ENCODE measurements at regions of chr1 and their contacts with region 1.

Region 1: DNA sequence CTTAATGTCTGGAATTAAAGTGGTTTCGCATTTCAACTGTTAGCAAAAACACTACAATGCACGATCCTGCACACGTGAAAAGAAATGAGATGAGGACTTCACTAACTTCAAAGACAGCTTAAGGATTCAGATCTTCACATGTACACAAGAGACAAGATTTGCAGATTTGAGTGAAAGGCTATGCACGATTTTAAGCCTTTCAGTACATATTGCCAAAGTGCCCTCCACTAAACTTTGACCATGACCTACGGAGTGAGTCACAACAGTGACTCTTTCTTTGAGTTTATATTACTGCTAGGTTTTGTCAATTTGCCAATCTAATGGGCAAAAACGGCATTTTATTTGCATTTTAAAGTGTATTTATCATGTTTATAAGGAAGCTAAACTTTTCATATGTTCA is 41.2 kb upstream of the CR1L start:
- DNase-seq: no peak
- ATAC-seq: no peak
- H3K4me3 ChIP-seq: no peak overlapping the region
- H3K27ac ChIP-seq: no peak overlapping the region
- H3K4me1 ChIP-seq: no peaks in the 10 kb centered on the region
- H3K27me3 ChIP-seq: no peaks in the 10 kb centered on the region
- CTCF ChIP-seq: no peak
- EP300 ChIP-seq: no peak
- POLR2A ChIP-seq: no peak
- RAD21 ChIP-seq: no peak

Region 2: DNA sequence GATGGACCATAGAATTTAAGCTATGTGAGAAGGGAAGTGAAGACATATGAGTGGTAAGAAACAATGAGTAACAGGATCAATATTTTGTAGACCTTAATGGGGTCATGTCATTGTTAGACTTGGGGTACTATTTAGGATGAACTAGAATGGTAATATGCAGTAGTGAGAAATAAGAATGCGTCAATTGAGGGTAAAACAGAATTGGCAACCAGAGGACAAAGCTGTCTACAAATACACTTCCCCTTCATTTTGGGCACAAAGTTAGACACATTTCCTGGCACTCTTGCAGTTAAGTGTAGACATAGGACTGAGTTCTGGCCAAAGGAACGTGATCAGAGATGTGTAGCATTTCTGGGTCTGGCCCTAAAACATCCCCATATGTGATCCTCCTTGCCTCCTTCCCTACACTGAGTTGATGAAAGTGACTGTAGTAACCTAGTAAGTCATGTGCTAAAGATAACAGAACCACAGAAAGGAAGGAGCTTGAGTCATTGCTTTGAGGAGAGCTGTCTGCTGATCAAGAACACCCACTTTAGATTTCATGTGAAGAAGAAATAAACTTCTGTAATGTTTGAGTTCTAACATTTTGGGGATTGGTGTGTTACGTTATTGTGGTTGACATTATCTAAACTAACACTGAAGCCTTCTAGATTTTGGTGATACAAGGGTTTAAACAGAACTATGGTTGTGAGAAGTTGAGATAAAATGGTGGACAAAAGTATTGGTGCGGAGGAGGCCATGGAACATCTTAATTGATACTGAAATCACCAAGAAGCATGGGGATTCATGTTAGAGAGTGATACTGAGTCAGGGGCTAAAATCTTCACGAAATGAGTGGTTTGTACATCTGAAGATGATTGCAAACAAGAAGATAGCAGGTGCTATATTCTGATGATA is 240.6 kb before region 1 on chr1:
- CTCF ChIA-PET with region 1: no interaction called
- POLR2A ChIA-PET with region 1: no interaction called
- RAD21 ChIA-PET with region 1: no interaction called
- SMC1A ChIA-PET with region 1: no interaction called
- in situ Hi-C with region 1: no loop called
- intact Hi-C with region 1: no loop called
- DNase-seq: no peak
- ATAC-seq: no peak
- H3K4me3 ChIP-seq: no peak overlapping the region
- H3K27ac ChIP-seq: no peak overlapping the region
- H3K4me1 ChIP-seq: no peaks in the 10 kb centered on the region
- H3K27me3 ChIP-seq: no peaks in the 10 kb centered on the region
- CTCF ChIP-seq: no peak
- EP300 ChIP-seq: no peak
- POLR2A ChIP-seq: no peak
- RAD21 ChIP-seq: no peak

Region 3: DNA sequence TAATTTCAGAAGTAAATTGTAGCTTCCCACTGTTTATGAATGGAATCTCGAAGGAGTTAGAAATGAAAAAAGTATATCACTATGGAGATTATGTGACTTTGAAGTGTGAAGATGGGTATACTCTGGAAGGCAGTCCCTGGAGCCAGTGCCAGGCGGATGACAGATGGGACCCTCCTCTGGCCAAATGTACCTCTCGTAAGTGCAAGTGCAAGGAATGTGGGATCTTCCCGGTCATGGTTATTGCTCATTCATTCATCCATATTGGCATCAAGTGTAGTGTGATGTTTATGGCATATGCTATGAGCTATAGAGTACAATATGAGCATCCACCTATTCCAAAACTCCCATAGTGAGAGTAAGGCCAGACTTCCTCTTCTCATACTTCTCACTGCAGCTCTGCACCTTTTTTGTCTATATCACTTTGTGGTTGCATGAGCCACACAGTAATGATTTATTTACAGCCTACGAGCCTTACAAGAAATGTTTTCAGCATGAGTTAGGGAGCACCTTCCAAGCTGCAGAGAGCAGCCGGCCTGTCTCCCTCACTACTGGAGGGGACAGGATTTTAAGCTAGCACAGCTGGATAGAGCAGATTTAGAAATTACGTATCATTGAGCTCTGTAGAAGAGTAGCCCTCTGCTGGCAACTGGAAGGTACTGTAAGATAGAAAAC is 16.2 kb after region 1 on chr1:
- CTCF ChIA-PET with region 1: interaction called, 19 read pairs
- POLR2A ChIA-PET with region 1: no interaction called
- RAD21 ChIA-PET with region 1: no interaction called
- SMC1A ChIA-PET with region 1: no interaction called
- in situ Hi-C with region 1: no loop called
- intact Hi-C with region 1: no loop called
- DNase-seq: no peak
- ATAC-seq: peak; percentile 96
- H3K4me3 ChIP-seq: no peak overlapping the region
- H3K27ac ChIP-seq: no peak overlapping the region
- H3K4me1 ChIP-seq: no peaks in the 10 kb centered on the region
- H3K27me3 ChIP-seq: no peaks in the 10 kb centered on the region
- CTCF ChIP-seq: peak; percentile 56 to 80 (median 68)
- EP300 ChIP-seq: no peak
- POLR2A ChIP-seq: no peak
- RAD21 ChIP-seq: peak; percentile 39; the same call in 1 of the 2 replicates

Measured in GM12878 (cell line).